CD4-positive, alpha-beta T cell (primary cell): ENCODE measurements at regions of chr11 and their contacts with region 1.

Region 1: GRCh38 chr11:88337181-88337986 is at the start of gene CTSC:
- DNase-seq: peak; percentile 81 to 95 (median 88)
- ATAC-seq: peak; percentile 92
- H3K4me3 ChIP-seq: peak within 1 kb of the TSS; percentile 93
- H3K4me3 Mint-ChIP-seq: peak within 1 kb of the TSS; percentile 91
- H3K27ac ChIP-seq: peak within 1 kb of the TSS; percentile 74 to 79
- H3K27ac Mint-ChIP-seq: peak within 1 kb of the TSS; percentile 97
- H3K4me1 ChIP-seq: peaks cover 21% of the 10 kb centered on the region
- H3K4me1 Mint-ChIP-seq: peaks cover 74% of the 10 kb centered on the region
- H3K27me3 ChIP-seq: no peaks in the 10 kb centered on the region
- H3K27me3 Mint-ChIP-seq: no peaks in the 10 kb centered on the region
- CTCF ChIP-seq: no peak
- total RNA-seq, gene CTSC: 28.5 to 32.6 TPM

Region 2: DNA sequence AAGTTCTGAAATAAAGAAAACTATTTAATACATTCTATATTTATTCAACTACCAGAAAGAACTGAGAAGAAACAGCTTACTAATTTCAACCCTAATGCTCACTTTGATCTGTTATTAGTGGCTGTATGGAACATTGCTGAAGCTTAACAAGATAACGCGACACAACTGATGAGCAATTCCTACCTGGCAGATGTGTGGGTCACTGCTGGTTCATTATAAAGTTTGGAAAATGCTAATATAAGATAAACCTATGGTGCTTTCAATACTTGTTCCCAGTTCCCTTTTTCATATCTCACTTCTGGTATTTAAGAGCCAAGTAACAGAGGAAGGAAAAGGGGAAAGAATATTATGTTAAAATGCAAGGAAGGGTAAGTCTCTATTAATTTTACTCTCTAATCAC is 10.3 kb before region 1 on chr11:
- CTCF ChIA-PET with region 1: interaction called, 5 read pairs
- POLR2A ChIA-PET with region 1: interaction called, 21 read pairs
- intact Hi-C with region 1: no loop called
- DNase-seq: no peak
- ATAC-seq: no peak
- H3K4me3 ChIP-seq: no peak overlapping the region
- H3K4me3 Mint-ChIP-seq: no peak overlapping the region
- H3K27ac ChIP-seq: no peak overlapping the region
- H3K27ac Mint-ChIP-seq: peak overlapping the region; percentile 10
- H3K4me1 ChIP-seq: peaks cover 24% of the 10 kb centered on the region
- H3K4me1 Mint-ChIP-seq: peaks cover 98% of the 10 kb centered on the region
- H3K27me3 ChIP-seq: no peaks in the 10 kb centered on the region
- H3K27me3 Mint-ChIP-seq: no peaks in the 10 kb centered on the region
- CTCF ChIP-seq: no peak

Region 3: DNA sequence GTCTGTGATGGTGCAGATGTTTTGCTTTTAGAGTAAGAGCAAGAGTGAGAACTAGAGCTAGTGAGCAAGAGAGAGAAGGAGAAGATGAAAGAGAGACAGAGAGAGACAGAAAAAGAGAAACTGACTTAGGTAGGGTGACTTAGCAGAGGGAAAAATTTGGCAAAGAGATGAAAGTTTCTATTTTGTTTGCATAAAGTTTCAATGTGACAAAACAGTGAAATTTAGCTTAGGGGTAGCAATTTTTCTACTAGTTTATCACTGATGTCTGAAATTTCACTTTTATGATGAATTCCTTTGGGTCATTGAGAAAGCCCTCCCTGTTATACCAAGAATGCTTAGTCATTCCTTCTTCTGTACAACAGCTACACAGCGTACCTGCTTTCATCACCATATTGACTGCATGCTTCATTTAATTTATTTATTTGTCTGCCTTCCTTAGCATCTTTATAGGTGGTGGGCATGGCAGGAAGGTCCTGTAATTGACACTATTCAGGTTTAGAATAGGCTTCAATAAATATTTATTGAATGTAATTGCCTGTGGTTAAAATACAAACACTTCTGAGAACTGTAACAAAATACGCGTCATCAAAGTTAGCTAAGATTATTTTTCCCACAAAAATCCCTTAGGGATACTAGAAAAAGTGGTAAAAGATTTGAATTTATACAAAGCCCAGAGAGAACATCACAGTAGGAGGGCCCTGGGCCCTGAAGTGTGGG is 20.1 kb after region 1 on chr11:
- CTCF ChIA-PET with region 1: interaction called, 3 read pairs
- POLR2A ChIA-PET with region 1: interaction called, 23 read pairs
- intact Hi-C with region 1: no loop called
- DNase-seq: no peak
- ATAC-seq: no peak
- H3K4me3 ChIP-seq: no peak overlapping the region
- H3K4me3 Mint-ChIP-seq: peak overlapping the region; percentile 9
- H3K27ac ChIP-seq: no peak overlapping the region
- H3K27ac Mint-ChIP-seq: peak overlapping the region; percentile 3
- H3K4me1 ChIP-seq: peaks cover 12% of the 10 kb centered on the region
- H3K4me1 Mint-ChIP-seq: peaks cover 49% of the 10 kb centered on the region
- H3K27me3 ChIP-seq: no peaks in the 10 kb centered on the region
- H3K27me3 Mint-ChIP-seq: no peaks in the 10 kb centered on the region
- CTCF ChIP-seq: no peak

Region 4: GRCh38 chr11:88363566-88364169 is 26.3 kb after region 1 on chr11:
- CTCF ChIA-PET with region 1: no interaction called
- POLR2A ChIA-PET with region 1: interaction called, 23 read pairs
- intact Hi-C with region 1: loop called in 1 of 2 experiments (anchors 2 kb)
- DNase-seq: no peak
- ATAC-seq: no peak
- H3K4me3 ChIP-seq: no peak overlapping the region
- H3K4me3 Mint-ChIP-seq: no peak overlapping the region
- H3K27ac ChIP-seq: peak overlapping the region in 1 of 2 donors; percentile 6
- H3K27ac Mint-ChIP-seq: no peak overlapping the region
- H3K4me1 ChIP-seq: peaks cover 8% of the 10 kb centered on the region
- H3K4me1 Mint-ChIP-seq: peaks cover 48% of the 10 kb centered on the region
- H3K27me3 ChIP-seq: no peaks in the 10 kb centered on the region
- H3K27me3 Mint-ChIP-seq: no peaks in the 10 kb centered on the region
- CTCF ChIP-seq: no peak

Region 5: GRCh38 chr11:88414385-88414861 is 77.0 kb after region 1 on chr11:
- CTCF ChIA-PET with region 1: no interaction called
- POLR2A ChIA-PET with region 1: interaction called, 24 read pairs
- intact Hi-C with region 1: loop called in 1 of 2 experiments (anchors 2 kb)
- DNase-seq: peak in 5 of 14 experiments; percentile 12 to 61 (median 52)
- ATAC-seq: peak; percentile 71
- H3K4me3 ChIP-seq: peak overlapping the region; percentile 9
- H3K4me3 Mint-ChIP-seq: peak overlapping the region; percentile 66
- H3K27ac ChIP-seq: no peak overlapping the region
- H3K27ac Mint-ChIP-seq: peak overlapping the region; percentile 43
- H3K4me1 ChIP-seq: peaks cover 19% of the 10 kb centered on the region
- H3K4me1 Mint-ChIP-seq: peaks cover 48% of the 10 kb centered on the region
- H3K27me3 ChIP-seq: no peaks in the 10 kb centered on the region
- H3K27me3 Mint-ChIP-seq: no peaks in the 10 kb centered on the region
- CTCF ChIP-seq: no peak

Region 6: DNA sequence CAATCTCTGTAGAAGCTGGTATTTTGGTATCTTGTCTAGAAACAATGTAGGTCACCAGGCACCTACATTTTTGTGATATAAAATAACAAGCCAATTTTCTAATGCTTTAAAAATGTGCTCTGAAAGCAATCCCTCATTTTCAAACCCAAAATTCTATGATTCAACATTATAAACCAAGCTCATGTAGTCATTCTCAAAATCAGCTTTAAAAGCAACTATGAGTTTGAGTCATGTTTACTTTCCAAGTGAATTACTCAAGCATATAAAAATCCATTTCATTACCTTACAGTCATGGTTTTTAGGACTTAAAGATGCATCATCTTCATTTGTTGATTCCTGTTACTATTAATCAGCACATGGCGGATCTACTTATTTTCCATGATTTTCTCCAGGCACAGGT is 512.0 kb after region 1 on chr11:
- CTCF ChIA-PET with region 1: no interaction called
- POLR2A ChIA-PET with region 1: no interaction called
- intact Hi-C with region 1: loop called in 1 of 2 experiments (anchors 10 kb)
- DNase-seq: no peak
- ATAC-seq: no peak
- H3K4me3 ChIP-seq: no peak overlapping the region
- H3K4me3 Mint-ChIP-seq: no peak overlapping the region
- H3K27ac ChIP-seq: no peak overlapping the region
- H3K27ac Mint-ChIP-seq: no peak overlapping the region
- H3K4me1 ChIP-seq: peaks cover 6% of the 10 kb centered on the region
- H3K4me1 Mint-ChIP-seq: peaks cover 19% of the 10 kb centered on the region
- H3K27me3 ChIP-seq: no peaks in the 10 kb centered on the region
- H3K27me3 Mint-ChIP-seq: no peaks in the 10 kb centered on the region
- CTCF ChIP-seq: no peak